ENCODE measurements at regions of chr11 and their contacts with region 1.

Region 1: GRCh38 chr11:75867775-75868374 is 52.9 kb downstream of the UVRAG start:
- H3K4me3 Mint-ChIP-seq: no peak overlapping the region
- H3K27ac Mint-ChIP-seq: peak overlapping the region; percentile 11
- H3K4me1 Mint-ChIP-seq: peaks cover 56% of the 10 kb centered on the region
- H3K27me3 Mint-ChIP-seq: no peaks in the 10 kb centered on the region

Region 2: GRCh38 chr11:75802913-75803820 is 64.7 kb before region 1 on chr11:
- intact Hi-C with region 1: loop called (anchors 1 kb)
- H3K4me3 Mint-ChIP-seq: no peak overlapping the region
- H3K27ac Mint-ChIP-seq: peak overlapping the region; percentile 86
- H3K4me1 Mint-ChIP-seq: peaks cover 41% of the 10 kb centered on the region
- H3K27me3 Mint-ChIP-seq: no peaks in the 10 kb centered on the region

Measured in dendritic cell treated with granulocyte-macrophage colony-stimulating factor and Interleukin-4, amounts not matched to agents 40 ng/mL and 50 ng/mL, for 4 days (primary cell).